Head of caudate nucleus (tissue), 42 donors: ENCODE measurements at regions of chr5 and their contacts with region 1.

Region 1: GRCh38 chr5:172106511-172107356 is 81.3 kb downstream of the STK10 start:
- DNase-seq: peak; percentile 43 to 91 (median 76)

Region 2: DNA sequence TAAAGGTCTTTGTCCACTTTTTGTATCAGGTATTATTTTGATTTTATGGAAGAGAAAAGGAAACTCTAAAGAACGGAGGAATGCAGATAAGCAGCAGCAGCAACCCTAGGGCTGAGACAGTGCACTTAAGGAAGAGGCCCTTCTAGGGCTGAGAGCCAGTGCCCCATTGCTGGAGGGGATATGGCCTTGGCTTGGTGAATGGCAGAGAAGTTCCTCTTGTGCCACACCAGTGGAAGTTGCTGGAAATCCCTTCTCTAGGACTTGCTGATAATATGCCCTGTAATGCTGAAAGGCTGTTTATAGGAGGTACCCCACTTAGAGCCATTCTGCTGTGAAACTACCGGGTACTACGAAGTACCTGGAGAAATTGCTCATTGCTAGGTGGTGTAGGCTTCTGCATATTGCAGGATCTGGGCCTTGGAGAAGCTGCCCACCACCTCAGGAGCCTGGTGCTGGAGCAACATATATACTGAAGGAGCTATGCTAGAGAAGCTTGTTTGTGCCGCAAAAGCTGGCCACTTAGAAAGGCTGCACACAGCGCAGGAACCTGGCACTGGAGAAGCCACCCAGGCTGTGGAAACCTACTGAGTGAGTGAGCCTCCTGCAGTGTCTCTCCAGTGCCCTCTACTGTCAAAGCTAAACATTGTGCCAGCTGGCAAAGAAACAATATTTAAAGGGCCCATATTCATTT is 186.5 kb after region 1 on chr5:
- intact Hi-C with region 1: loop called (anchors 5 kb)
- DNase-seq: peak; percentile 43 to 90 (median 74)